IMR-90 (cell line): ENCODE measurements at regions of chr3 and their contacts with region 1.

Region 1: DNA sequence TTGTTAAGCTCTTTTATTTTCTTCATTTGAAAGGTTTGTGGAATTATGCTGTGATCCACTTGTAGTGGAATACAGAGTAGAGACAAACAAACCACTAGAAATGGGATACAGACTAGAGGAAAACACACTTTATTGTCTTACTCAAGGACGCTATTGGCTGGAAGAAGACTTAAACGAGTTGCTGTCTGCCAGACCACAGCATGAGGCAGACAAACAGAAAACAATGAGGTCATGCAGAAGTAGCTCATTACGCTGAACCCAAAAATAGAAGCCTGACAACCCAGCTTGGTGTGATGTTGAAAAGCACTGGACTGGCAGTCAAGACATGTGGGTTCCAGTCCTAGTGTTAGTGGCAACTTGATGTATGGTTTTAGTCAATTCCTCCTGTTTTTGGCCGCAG is 62.4 kb upstream of the P3H2 start:
- DNase-seq: peak; percentile 98
- ATAC-seq: peak; percentile 64
- H3K4me3 ChIP-seq: no peak overlapping the region
- H3K27ac ChIP-seq: peak overlapping the region; percentile 33
- H3K4me1 ChIP-seq: peaks cover 6% of the 10 kb centered on the region; the same call in 1 of the 2 replicates
- H3K27me3 ChIP-seq: no peaks in the 10 kb centered on the region
- CTCF ChIP-seq: no peak
- POLR2A ChIP-seq: no peak; the same call in none of the 2 replicates
- RAD21 ChIP-seq: peak; percentile 2; the same call in 1 of the 2 replicates

Region 2: DNA sequence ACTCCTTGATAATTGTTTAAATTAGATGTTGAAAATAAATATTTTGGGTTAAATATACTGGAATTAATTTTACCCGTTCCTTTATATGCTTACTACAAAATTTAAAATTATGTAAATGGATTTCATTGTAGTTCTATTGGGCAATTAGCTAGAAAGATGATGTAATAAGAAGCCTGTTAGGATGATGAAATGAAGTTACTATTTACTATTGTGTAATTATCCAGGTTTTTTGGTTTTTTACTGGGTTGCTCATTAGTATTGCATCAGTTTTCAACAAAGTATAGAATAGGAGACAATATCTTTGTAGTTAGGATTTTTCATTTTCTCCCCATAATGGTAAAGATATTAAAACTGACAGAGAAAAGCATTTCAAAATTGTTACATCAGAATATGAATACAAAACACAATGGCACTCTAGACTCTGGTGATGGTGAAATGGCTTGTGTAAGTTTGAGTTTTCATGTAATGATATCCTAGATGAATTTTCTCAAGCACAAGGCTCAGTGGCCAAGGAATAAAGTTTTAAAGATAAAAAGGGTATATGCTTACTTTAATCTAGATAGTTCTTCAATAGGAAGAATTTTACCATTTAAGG is 284.5 kb before region 1 on chr3:
- CTCF ChIA-PET with region 1: no interaction called
- POLR2A ChIA-PET with region 1: no interaction called
- dilution Hi-C with region 1: no loop called
- in situ Hi-C with region 1: no loop called
- intact Hi-C with region 1: no loop called
- DNase-seq: no peak
- ATAC-seq: no peak
- H3K4me3 ChIP-seq: no peak overlapping the region
- H3K27ac ChIP-seq: no peak overlapping the region
- H3K4me1 ChIP-seq: no peaks in the 10 kb centered on the region
- H3K27me3 ChIP-seq: no peaks in the 10 kb centered on the region; the same call in 1 of the 2 replicates
- CTCF ChIP-seq: no peak
- POLR2A ChIP-seq: no peak
- RAD21 ChIP-seq: no peak

Region 3: DNA sequence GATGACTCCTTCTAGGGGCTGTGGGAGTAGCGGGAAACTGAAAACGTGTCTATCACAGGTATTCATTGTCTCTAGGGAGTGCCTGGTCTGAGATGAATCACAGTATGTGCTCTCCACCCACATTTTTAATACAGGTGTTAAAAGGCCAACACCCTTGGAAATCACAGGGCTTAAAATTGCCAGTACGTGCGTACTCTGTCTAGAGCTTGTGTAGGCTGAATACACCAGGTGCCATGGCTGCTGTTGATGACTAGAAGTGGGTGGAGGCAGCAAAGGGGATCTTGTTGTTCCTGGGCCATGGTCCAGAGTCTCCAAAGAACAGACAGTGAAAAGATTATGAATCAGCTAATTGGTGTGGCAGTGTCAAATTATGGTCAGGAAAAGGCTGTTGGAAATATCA is 27.4 kb before region 1 on chr3:
- CTCF ChIA-PET with region 1: interaction called, 4 read pairs
- POLR2A ChIA-PET with region 1: no interaction called
- dilution Hi-C with region 1: no loop called
- in situ Hi-C with region 1: no loop called
- intact Hi-C with region 1: loop called (anchors 1 kb)
- DNase-seq: no peak
- ATAC-seq: no peak
- H3K4me3 ChIP-seq: no peak overlapping the region
- H3K27ac ChIP-seq: no peak overlapping the region
- H3K4me1 ChIP-seq: peaks cover 2% of the 10 kb centered on the region; the same call in 1 of the 2 replicates
- H3K27me3 ChIP-seq: peaks cover 3% of the 10 kb centered on the region; the same call in 1 of the 2 replicates
- CTCF ChIP-seq: no peak
- POLR2A ChIP-seq: no peak
- RAD21 ChIP-seq: no peak

Region 4: GRCh38 chr3:190513409-190514162 is 330.5 kb after region 1 on chr3 and contains the start of gene IL1RAP:
- CTCF ChIA-PET with region 1: no interaction called
- POLR2A ChIA-PET with region 1: no interaction called
- dilution Hi-C with region 1: no loop called
- in situ Hi-C with region 1: no loop called
- intact Hi-C with region 1: no loop called
- DNase-seq: peak; percentile 88
- ATAC-seq: peak; percentile 98
- H3K4me3 ChIP-seq: peak within 1 kb of the TSS; percentile 60
- H3K27ac ChIP-seq: peak within 1 kb of the TSS; percentile 60
- H3K4me1 ChIP-seq: peaks cover 7% of the 10 kb centered on the region; the same call in 1 of the 2 replicates
- H3K27me3 ChIP-seq: no peaks in the 10 kb centered on the region
- CTCF ChIP-seq: peak; percentile 77
- POLR2A ChIP-seq: peak; percentile 56
- RAD21 ChIP-seq: peak; percentile 46
- total RNA-seq, gene IL1RAP: 9.4 and 11.3 TPM in 2 replicates